HCT116 (cell line): ENCODE measurements at regions of chr6 and their contacts with region 1.

Region 1: GRCh38 chr6:127606131-127606562 is 29.2 kb downstream of the C6orf58 start:
- DNase-seq: peak; percentile 41
- ATAC-seq: peak; percentile 91
- H3K4me3 ChIP-seq: no peak overlapping the region
- H3K27ac ChIP-seq: no peak overlapping the region
- H3K4me1 ChIP-seq: no peaks in the 10 kb centered on the region
- H3K27me3 ChIP-seq: no peaks in the 10 kb centered on the region
- CTCF ChIP-seq: peak; percentile 45 to 63 (median 47); a peak in 5 of 6 replicates
- POLR2A ChIP-seq: no peak
- RAD21 ChIP-seq: peak; percentile 81

Region 2: GRCh38 chr6:127641905-127642304 is 35.8 kb after region 1 on chr6:
- CTCF ChIA-PET with region 1: interaction called, 20 read pairs
- POLR2A ChIA-PET with region 1: no interaction called
- RAD21 ChIA-PET with region 1: interaction called in 1 of 2 experiments, 4 read pairs
- intact Hi-C with region 1: no loop called
- DNase-seq: peak; percentile 24
- ATAC-seq: peak; percentile 93
- H3K4me3 ChIP-seq: no peak overlapping the region
- H3K27ac ChIP-seq: no peak overlapping the region
- H3K4me1 ChIP-seq: no peaks in the 10 kb centered on the region
- H3K27me3 ChIP-seq: no peaks in the 10 kb centered on the region
- CTCF ChIP-seq: peak; percentile 60 to 76 (median 75); a peak in 5 of 6 replicates
- POLR2A ChIP-seq: no peak
- RAD21 ChIP-seq: peak; percentile 73

Region 3: GRCh38 chr6:127690092-127690491 is 83.9 kb after region 1 on chr6:
- CTCF ChIA-PET with region 1: interaction called, 22 read pairs
- POLR2A ChIA-PET with region 1: no interaction called
- RAD21 ChIA-PET with region 1: interaction called, 4 read pairs
- intact Hi-C with region 1: loop called (anchors 1 kb)
- DNase-seq: peak; percentile 27
- ATAC-seq: no peak
- H3K4me3 ChIP-seq: no peak overlapping the region
- H3K27ac ChIP-seq: no peak overlapping the region
- H3K4me1 ChIP-seq: no peaks in the 10 kb centered on the region
- H3K27me3 ChIP-seq: no peaks in the 10 kb centered on the region
- CTCF ChIP-seq: peak; percentile 64 to 75 (median 71)
- POLR2A ChIP-seq: no peak
- RAD21 ChIP-seq: peak; percentile 81

Region 4: DNA sequence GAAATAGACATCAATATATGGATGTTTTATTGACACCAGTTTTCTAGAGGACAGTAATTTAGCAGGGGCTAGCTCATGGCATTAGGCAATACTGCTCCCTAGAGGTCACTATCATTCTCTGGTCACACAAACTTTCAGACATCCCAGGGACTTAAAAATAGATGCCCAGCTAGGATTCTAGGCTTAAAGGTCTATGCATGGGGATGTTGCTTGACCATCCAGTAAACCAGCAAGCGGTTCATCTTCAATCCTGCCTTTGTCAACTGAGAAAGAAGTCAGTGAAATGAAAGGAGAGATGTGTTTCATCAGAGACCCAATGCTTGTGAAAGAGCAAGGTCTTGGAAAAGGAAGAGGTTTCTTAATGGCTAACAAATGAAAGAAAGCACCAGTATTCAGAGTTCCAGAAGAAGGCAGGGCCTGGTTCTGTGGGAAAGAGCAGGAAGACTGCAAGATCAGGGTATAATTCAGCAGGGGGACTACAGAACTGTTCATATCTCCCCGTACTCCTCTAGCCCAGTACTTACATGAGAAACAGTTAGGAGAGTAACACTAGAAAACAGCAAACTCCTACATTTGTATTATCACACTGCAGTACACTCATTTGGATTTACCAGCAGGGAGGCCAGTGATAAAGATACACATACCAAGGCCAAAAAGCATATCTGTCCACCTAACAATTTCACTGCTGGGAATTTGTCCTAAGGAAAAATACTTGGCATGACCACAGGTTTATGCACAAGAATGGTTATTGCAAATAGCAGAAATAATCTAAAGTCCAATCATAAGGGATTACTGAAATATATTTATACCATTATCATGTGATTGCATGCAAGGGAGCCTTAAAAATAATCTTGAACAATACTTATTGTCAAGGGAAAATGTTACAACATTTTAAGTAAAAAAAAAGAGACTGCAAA is 1125.4 kb after region 1 on chr6:
- CTCF ChIA-PET with region 1: interaction called, 6 read pairs
- POLR2A ChIA-PET with region 1: no interaction called
- RAD21 ChIA-PET with region 1: no interaction called
- intact Hi-C with region 1: loop called (anchors 1 kb)
- DNase-seq: peak; percentile 40
- ATAC-seq: peak; percentile 88
- H3K4me3 ChIP-seq: no peak overlapping the region
- H3K27ac ChIP-seq: no peak overlapping the region
- H3K4me1 ChIP-seq: no peaks in the 10 kb centered on the region
- H3K27me3 ChIP-seq: no peaks in the 10 kb centered on the region
- CTCF ChIP-seq: peak; percentile 55 to 74 (median 67)
- POLR2A ChIP-seq: no peak
- RAD21 ChIP-seq: peak; percentile 88

Region 5: DNA sequence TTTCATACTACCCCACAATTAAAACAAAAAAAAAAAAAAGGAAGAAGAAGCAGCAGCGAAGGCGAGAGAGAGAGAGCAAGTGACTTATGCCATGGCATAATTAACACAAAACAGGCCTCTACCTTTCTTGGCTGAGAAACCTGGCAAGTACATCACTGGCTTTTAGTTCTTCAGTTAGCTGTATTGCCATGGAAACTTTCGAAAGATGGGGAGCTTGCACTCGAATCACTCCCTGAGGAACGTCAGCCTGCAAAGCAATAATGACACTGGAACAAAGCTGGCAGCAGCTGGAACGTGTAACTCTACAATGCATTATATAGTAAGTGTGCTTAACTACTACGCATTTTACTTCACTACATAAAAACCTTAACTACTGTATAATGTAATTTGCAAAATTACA is 1977.7 kb after region 1 on chr6:
- CTCF ChIA-PET with region 1: no interaction called
- POLR2A ChIA-PET with region 1: no interaction called
- RAD21 ChIA-PET with region 1: no interaction called
- intact Hi-C with region 1: loop called (anchors 10 kb)
- DNase-seq: no peak
- ATAC-seq: no peak
- H3K4me3 ChIP-seq: no peak overlapping the region
- H3K27ac ChIP-seq: no peak overlapping the region
- H3K4me1 ChIP-seq: no peaks in the 10 kb centered on the region
- H3K27me3 ChIP-seq: no peaks in the 10 kb centered on the region
- CTCF ChIP-seq: no peak
- POLR2A ChIP-seq: no peak
- RAD21 ChIP-seq: no peak